Right lobe of liver (tissue), 6 donors: ENCODE measurements at regions of chr19 and their contacts with region 1.

Region 1: GRCh38 chr19:41872775-41873647 is 4.1 kb upstream of the CD79A start:
- DNase-seq: peak; percentile 72 to 83 (median 76)
- ATAC-seq: peak; percentile 73 to 77 (median 76)
- H3K4me3 ChIP-seq: no peak overlapping the region
- H3K27ac ChIP-seq: no peak overlapping the region
- H3K4me1 ChIP-seq: peaks cover 0 to 12% (median 0%) of the 10 kb centered on the region in 4 donors
- H3K27me3 ChIP-seq: no peaks in the 10 kb centered on the region
- CTCF ChIP-seq: peak; percentile 53 to 79 (median 67)
- POLR2A ChIP-seq: no peak

Region 2: GRCh38 chr19:41934849-41935374 is 61.9 kb after region 1 on chr19:
- intact Hi-C with region 1: loop called in 1 of 2 experiments (anchors 10 kb)
- DNase-seq: peak in 2 of 3 donors; percentile 64 to 68
- ATAC-seq: peak; percentile 62 to 87 (median 82)
- H3K4me3 ChIP-seq: no peak overlapping the region
- H3K27ac ChIP-seq: no peak overlapping the region
- H3K4me1 ChIP-seq: no peaks in the 10 kb centered on the region
- H3K27me3 ChIP-seq: peaks cover 4 to 11% of the 10 kb centered on the region in 2 donors
- CTCF ChIP-seq: peak; percentile 63 to 80 (median 72)
- POLR2A ChIP-seq: no peak

Region 3: DNA sequence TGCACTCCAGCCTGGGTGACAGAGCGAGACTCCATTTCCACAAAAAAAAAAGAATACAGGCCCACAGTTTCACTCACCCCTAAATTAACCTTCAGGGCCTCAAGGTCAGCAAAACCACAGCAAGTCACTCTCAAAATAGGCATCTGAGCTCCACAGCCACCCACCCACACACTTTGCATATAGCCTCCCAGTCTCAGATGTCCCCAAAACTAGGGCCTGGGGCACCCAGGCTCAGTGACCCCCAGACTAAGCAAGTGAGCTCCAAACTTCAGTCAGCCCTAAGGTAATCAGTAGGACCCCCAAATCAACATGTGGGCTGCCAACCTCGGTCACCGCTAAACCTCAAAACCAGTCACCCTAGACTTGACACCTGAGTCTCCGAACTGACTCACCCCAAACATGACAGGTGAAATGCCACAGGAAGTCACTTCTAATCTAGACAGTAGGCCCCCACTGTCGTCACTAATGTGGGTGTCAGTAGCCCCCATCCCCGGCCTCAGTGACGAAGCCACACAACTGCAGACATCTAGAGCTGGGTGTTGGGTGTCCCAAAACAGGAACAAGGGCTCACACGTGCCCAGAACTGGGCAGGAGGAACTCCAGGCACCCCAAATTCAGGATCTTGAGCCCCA is 72.2 kb after region 1 on chr19:
- intact Hi-C with region 1: loop called in 1 of 2 experiments (anchors 5 kb)
- DNase-seq: no peak
- ATAC-seq: peak; percentile 40 to 54 (median 49)
- H3K4me3 ChIP-seq: no peak overlapping the region
- H3K27ac ChIP-seq: no peak overlapping the region
- H3K4me1 ChIP-seq: peaks cover 0 to 6% (median 0%) of the 10 kb centered on the region in 4 donors
- H3K27me3 ChIP-seq: peaks cover 0 to 9% of the 10 kb centered on the region in 2 donors
- CTCF ChIP-seq: no peak
- POLR2A ChIP-seq: no peak